ENCODE measurements at regions of chr2 and their contacts with region 1.

Region 1: DNA sequence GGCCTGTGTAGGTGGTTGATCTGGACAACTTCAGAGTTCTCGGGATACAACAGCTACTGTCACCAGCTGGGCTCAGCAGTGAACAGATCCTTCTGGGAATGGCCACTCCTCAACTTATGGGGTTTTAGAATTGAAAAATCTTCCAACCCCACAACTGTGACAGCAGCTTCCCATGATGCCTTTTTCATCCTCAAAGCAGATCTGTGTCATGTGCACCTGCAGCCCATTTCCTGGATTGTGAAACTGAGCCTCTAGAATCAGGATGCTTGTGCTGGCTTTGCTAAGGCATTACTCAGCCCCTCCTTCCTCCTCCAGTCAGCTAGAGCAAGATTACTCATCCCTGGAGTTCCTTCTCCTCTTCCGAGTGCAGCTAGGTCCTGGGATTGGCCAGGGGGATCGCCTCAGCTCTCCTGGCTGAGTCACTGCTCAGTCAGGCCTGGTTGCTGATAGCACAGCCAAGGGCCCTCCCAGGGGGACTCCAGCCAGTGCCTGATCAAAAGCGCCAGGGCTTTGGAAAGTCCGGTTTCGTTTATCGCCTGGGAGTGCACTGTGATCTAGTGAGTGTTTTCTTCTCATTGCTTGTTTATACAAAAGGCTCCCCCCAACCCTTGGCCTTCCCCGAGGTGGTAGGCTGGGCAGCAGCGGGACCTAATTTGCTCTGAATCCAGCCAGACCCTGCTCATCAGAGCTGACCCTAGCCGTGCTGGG is 2.4 kb upstream of the LPIN1 start:
- DNase-seq: peak; percentile 81
- H3K4me3 ChIP-seq: peak overlapping the region; percentile 51
- H3K27ac ChIP-seq: peak overlapping the region; percentile 31
- H3K4me1 ChIP-seq: peaks cover 52% of the 10 kb centered on the region
- CTCF ChIP-seq: no peak

Region 2: DNA sequence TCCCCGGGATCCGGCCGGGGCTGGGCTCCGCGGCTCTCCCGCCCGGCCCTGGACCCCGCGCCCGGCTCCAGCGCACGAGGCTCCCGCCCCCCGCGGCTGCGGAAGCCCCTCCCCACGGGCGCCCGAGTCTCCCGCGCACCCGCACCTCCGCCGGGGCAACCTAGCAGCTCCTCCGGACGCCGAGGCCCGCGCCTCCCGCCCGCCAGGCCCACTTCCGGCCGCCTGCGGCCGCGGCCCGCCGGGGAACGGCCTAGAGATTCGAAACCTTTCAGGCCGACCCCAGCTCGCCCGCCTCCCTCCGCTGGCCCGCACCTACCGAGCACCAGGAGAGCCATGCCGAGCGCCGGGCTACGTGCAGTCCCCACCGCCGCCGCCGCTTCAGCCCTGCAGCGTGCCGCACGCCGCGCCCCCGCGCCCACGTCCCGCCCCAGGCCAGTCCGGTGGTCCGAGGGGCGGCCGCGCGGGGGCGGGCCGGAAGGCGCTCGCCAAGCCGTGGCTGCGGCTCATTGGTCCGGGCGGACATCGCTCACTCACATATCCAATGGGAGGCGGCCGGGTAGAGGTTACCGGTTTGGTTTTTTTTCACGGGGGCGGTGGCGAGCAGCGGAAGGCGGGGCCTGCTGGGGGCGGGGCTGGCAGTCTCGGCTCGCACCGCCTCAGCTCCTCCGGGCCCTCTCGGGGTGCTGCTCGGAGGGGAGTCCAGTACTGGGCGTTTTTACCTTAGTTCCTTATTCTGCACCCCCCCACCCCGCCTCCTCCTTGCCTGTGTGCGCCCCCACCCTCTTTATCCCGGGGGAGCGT is 931.4 kb before region 1 on chr2 and contains the start of gene PDIA6:
- CTCF ChIA-PET with region 1: no interaction called
- POLR2A ChIA-PET with region 1: no interaction called
- intact Hi-C with region 1: loop called (anchors 5 kb)
- DNase-seq: peak; percentile 97
- H3K4me3 ChIP-seq: peak within 1 kb of the TSS; percentile 79
- H3K27ac ChIP-seq: peak within 1 kb of the TSS; percentile 70
- H3K4me1 ChIP-seq: peaks cover 46% of the 10 kb centered on the region
- CTCF ChIP-seq: no peak
- total RNA-seq, gene PDIA6: 171 and 192 TPM in 2 replicates

Region 3: GRCh38 chr2:11688222-11689069 is 55.6 kb before region 1 on chr2:
- CTCF ChIA-PET with region 1: interaction called, 5 read pairs
- POLR2A ChIA-PET with region 1: interaction called, 3 read pairs
- intact Hi-C with region 1: loop called (anchors 2 kb)
- DNase-seq: peak; percentile 82
- H3K4me3 ChIP-seq: no peak overlapping the region
- H3K27ac ChIP-seq: no peak overlapping the region
- H3K4me1 ChIP-seq: peaks cover 10% of the 10 kb centered on the region
- CTCF ChIP-seq: peak; percentile 98

Region 4: DNA sequence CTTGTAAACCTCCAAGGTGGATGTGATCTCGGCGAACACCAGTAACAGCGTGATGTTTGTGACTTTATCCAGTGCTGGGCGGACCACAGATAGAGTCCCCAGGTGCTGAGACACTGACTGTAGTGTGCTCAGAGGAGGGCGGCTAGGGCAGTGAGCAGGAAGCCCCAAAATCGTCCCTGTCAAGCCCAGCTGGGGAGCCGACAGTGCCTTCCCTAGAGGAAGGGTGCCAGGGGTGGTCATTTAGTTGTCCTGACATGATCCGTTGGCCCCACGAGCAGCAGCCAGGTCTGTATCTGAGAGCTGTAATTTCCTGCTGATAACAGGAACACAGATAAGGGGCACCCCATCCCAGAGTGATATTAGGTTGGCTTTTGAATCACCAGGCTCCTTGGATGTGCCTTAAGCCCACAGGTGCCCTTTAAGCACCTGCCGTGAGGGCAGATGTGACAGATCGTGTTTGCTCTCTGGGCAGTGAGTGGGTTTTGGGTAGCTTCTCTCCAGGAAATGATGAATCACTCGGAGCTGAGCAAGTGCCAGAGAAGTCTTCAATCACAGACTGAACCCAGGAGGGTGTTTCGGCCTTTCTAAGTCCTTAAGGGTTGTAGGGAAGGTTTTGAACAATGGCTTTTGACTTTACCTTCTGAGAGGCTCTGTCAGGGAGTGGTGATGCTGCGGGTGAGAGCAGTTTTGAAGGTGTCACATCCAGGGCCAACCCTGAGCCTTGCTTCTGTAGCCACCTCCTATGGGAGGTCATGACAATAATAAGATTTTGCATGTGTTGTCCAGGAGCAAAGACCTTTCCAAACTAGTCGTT is 10.1 kb after region 1 on chr2:
- CTCF ChIA-PET with region 1: interaction called, 10 read pairs
- POLR2A ChIA-PET with region 1: interaction called, 29 read pairs
- intact Hi-C with region 1: no loop called
- DNase-seq: peak; percentile 63
- H3K4me3 ChIP-seq: peak overlapping the region; percentile 62
- H3K27ac ChIP-seq: peak overlapping the region; percentile 95
- H3K4me1 ChIP-seq: peaks cover 87% of the 10 kb centered on the region
- CTCF ChIP-seq: no peak

Region 5: DNA sequence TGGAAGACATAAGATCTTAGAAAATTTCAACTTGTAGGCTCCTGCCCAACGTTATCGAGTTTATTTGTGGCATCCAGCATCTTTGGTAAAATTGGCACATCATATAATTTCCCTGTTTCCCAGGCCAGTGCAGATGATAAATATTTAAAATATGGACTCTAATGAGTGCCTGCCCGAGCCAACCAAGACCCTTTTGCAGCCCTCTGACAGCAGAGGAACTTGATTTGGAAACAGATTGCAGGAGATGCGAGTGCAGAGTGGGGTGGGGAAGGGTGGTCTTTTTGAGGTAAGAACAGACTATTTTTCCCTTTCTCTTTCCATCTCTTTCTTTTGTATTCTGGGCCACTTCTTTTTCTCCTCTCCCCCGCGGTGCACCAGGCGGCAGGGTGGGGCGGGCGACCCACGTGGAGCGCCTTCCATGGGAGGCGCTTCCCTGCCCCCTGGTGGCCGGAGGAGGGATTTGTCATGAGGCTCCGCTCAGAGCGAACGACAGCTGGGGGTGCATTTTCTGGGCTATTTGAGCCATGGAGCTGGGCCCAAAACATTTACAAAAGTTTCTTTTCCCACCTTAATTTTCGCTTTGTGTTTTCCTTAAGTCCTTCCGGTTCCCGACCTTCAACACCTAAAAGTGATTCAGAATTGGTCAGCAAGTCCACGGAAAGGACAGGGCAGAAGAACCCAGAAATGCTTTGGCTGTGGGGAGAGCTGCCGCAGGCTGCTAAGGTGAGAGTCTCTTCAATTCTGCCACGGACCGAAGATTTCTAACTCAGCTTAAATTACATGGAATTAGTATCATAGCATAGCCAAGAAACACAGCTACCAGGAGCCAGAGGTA is 35.1 kb after region 1 on chr2:
- CTCF ChIA-PET with region 1: interaction called, 9 read pairs
- POLR2A ChIA-PET with region 1: interaction called, 8 read pairs
- intact Hi-C with region 1: loop called (anchors 2 kb)
- DNase-seq: peak; percentile 81
- H3K4me3 ChIP-seq: no peak overlapping the region
- H3K27ac ChIP-seq: no peak overlapping the region
- H3K4me1 ChIP-seq: peaks cover 15% of the 10 kb centered on the region
- CTCF ChIP-seq: peak; percentile 97

Region 6: DNA sequence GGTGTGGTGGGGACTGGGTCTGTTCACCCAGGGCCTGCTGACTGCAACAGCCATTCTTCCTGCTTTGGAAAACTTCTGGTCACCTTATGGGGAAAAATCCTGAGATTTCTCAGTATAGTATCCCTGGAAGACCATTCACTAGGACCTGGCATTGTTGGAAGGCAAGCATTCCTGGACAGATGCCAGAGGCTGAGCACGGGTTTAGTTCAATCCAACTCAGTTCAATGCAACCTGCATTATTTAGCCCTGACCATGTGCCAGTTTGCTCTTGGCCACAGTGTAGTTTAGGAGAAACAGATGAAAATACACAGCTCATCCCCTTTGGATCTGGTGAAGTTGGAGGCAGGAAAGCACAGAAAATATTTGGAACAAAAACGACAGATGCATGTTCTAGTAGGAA is 98.3 kb after region 1 on chr2:
- CTCF ChIA-PET with region 1: no interaction called
- POLR2A ChIA-PET with region 1: no interaction called
- intact Hi-C with region 1: no loop called
- DNase-seq: no peak
- H3K4me3 ChIP-seq: no peak overlapping the region
- H3K27ac ChIP-seq: no peak overlapping the region
- H3K4me1 ChIP-seq: no peaks in the 10 kb centered on the region
- CTCF ChIP-seq: no peak